GM10248 (cell line): ENCODE measurements at regions of chr11 and their contacts with region 1.

Region 1: GRCh38 chr11:72814286-72815109 is at the start of gene ATG16L2:
- DNase-seq: peak; percentile 95
- CTCF ChIP-seq: peak; percentile 25

Region 2: DNA sequence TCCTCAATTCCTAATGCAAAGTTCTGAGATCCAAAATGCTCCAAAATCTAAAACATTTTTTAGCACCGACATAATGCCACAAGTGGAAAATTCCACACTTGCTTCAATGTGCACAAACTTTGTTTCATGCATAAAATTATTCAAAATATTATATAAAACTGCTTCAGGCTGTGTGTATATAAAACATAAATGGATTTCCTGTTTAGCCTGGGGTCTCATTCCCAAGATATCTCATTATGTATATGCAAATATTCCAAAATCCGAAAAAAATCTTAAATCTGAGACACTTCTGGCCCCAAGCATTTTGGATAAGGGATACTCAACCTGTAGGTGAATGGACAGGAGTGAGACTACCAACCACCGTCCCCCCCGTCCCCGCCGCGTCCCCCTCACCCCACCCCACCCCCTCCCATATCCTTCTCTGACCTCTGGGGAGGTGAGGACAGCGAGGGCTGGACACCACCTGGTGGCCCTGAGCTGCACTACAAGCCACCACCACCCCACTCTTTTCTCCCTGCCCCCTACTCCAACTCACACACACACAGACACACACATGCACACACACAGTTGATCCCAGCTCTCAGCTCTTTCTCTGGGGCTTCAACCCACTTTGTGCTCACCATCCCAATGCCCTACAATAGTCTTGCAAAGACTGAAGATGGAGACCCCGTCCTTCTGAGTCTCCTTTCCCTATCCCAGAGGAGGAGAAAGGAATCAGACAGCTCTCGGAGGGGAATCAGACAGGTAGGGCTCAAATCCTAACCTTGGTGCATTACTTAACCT is 241.2 kb before region 1 on chr11:
- CTCF ChIA-PET with region 1: no interaction called
- POLR2A ChIA-PET with region 1: no interaction called
- DNase-seq: peak; percentile 70
- CTCF ChIP-seq: peak; percentile 62

Region 3: GRCh38 chr11:72787216-72788104 is 27.0 kb before region 1 on chr11:
- CTCF ChIA-PET with region 1: interaction called, 76 read pairs
- POLR2A ChIA-PET with region 1: no interaction called
- DNase-seq: peak; percentile 78
- CTCF ChIP-seq: no peak

Region 4: GRCh38 chr11:72802822-72803221 is 11.7 kb before region 1 on chr11:
- CTCF ChIA-PET with region 1: interaction called, 13 read pairs
- POLR2A ChIA-PET with region 1: interaction called, 3 read pairs
- DNase-seq: no peak
- CTCF ChIP-seq: no peak

Region 5: DNA sequence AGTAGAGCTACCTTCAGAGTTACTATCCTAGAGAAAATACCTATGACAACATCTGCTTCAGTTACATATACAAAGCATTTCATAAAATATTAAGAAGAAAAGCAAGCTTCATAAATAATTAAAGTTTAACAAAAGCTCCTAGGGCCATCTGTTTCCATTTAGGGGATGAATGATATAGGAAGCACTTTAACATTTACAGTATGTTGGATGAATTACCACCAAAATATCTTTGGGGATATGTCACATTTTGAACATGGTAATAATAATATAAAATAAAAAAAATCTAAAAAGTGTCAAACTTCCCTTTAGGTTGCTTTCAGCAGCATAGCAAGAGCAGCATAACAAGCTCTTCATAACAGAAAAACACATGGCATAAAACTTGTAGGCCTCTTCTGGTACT is 104.4 kb after region 1 on chr11:
- CTCF ChIA-PET with region 1: no interaction called
- POLR2A ChIA-PET with region 1: no interaction called
- DNase-seq: no peak
- CTCF ChIP-seq: no peak